ENCODE measurements at regions of chr12 and their contacts with region 1.

Region 1: GRCh38 chr12:100348657-100349454 is 8.0 kb upstream of the SLC17A8 start:
- DNase-seq: peak; percentile 50
- H3K4me3 Mint-ChIP-seq: no peak overlapping the region
- H3K27ac Mint-ChIP-seq: no peak overlapping the region
- H3K4me1 Mint-ChIP-seq: no peaks in the 10 kb centered on the region
- H3K27me3 Mint-ChIP-seq: no peaks in the 10 kb centered on the region
- CTCF ChIP-seq: peak; percentile 38

Region 2: DNA sequence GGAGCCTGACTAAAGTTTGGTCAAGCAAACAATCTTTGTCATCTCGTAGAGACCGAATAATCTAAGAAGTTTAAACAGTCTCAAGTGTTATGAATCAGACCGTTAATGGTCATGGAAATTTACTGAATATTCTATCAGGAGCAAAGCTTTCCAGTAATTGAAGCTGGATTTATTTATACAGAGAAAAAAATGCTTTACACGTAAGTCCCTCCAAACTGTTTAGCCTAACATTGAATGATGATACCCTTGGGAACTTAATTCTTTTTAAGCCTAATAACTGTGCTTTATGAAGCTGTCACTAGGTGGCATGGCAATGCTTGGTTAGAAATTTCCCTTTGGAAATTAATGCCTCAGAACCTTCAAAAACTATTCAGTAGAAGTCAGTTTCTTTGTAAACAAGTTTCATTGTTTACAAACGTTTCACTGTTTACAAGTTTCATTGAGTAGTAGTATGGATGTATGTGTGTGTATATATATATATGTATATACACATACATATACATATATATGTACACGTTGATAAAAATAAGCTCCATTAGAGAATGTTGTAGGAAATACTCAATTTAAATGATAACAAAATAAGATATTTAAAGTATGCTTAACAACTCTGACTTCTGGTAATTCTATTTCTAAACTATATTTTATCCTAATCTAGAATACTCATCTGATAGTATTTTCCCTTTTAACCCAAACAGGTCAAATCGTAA is 114.1 kb before region 1 on chr12:
- CTCF ChIA-PET with region 1: interaction called, 17 read pairs
- POLR2A ChIA-PET with region 1: no interaction called
- intact Hi-C with region 1: loop called (anchors 2 kb)
- DNase-seq: peak; percentile 56
- H3K4me3 Mint-ChIP-seq: no peak overlapping the region
- H3K27ac Mint-ChIP-seq: no peak overlapping the region
- H3K4me1 Mint-ChIP-seq: peaks cover 6% of the 10 kb centered on the region
- H3K27me3 Mint-ChIP-seq: no peaks in the 10 kb centered on the region
- CTCF ChIP-seq: peak; percentile 60

Region 3: DNA sequence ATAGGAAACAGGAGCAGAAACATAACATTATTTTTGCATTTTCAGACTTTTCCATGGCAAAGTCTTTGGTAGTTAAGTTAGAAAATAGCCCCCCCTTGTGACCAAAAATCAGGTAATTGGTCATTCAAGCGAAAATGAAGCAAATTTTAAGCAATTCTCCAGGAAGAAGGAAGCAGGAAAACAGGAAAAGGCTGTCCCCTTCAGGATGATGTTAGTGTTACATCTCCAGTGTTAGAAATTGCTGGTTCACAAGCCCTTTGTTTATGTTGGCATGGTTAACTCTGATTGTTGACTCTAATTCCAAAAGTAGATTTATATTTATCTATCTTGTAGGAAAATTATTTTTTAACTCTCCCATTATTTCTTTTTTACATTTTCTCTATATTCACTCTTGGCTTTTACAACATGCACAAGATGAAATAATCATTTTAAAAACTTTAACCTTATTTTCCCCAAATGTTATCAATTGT is 205.8 kb after region 1 on chr12:
- CTCF ChIA-PET with region 1: interaction called, 99 read pairs
- POLR2A ChIA-PET with region 1: interaction called, 3 read pairs
- intact Hi-C with region 1: loop called (anchors 1 kb)
- DNase-seq: peak; percentile 91
- H3K4me3 Mint-ChIP-seq: no peak overlapping the region
- H3K27ac Mint-ChIP-seq: no peak overlapping the region
- H3K4me1 Mint-ChIP-seq: no peaks in the 10 kb centered on the region
- H3K27me3 Mint-ChIP-seq: no peaks in the 10 kb centered on the region
- CTCF ChIP-seq: peak; percentile 91

Region 4: GRCh38 chr12:100593490-100593889 is 244.6 kb after region 1 on chr12:
- CTCF ChIA-PET with region 1: no interaction called
- POLR2A ChIA-PET with region 1: no interaction called
- intact Hi-C with region 1: no loop called
- DNase-seq: peak; percentile 6
- H3K4me3 Mint-ChIP-seq: peak overlapping the region; percentile 68
- H3K27ac Mint-ChIP-seq: peak overlapping the region; percentile 80
- H3K4me1 Mint-ChIP-seq: peaks cover 20% of the 10 kb centered on the region
- H3K27me3 Mint-ChIP-seq: no peaks in the 10 kb centered on the region
- CTCF ChIP-seq: no peak

Region 5: GRCh38 chr12:100668945-100669536 is 320.2 kb after region 1 on chr12:
- CTCF ChIA-PET with region 1: interaction called, 12 read pairs
- POLR2A ChIA-PET with region 1: no interaction called
- intact Hi-C with region 1: no loop called
- DNase-seq: peak; percentile 83
- H3K4me3 Mint-ChIP-seq: no peak overlapping the region
- H3K27ac Mint-ChIP-seq: no peak overlapping the region
- H3K4me1 Mint-ChIP-seq: no peaks in the 10 kb centered on the region
- H3K27me3 Mint-ChIP-seq: peaks cover 23% of the 10 kb centered on the region
- CTCF ChIP-seq: peak; percentile 86

Region 6: GRCh38 chr12:100741084-100741711 is 392.3 kb after region 1 on chr12:
- CTCF ChIA-PET with region 1: interaction called, 21 read pairs
- POLR2A ChIA-PET with region 1: no interaction called
- intact Hi-C with region 1: no loop called
- DNase-seq: peak; percentile 37
- H3K4me3 Mint-ChIP-seq: no peak overlapping the region
- H3K27ac Mint-ChIP-seq: no peak overlapping the region
- H3K4me1 Mint-ChIP-seq: no peaks in the 10 kb centered on the region
- H3K27me3 Mint-ChIP-seq: peaks cover 6% of the 10 kb centered on the region
- CTCF ChIP-seq: peak; percentile 51